H1 (cell line): ENCODE measurements at regions of chr17 and their contacts with region 1.

Region 1: DNA sequence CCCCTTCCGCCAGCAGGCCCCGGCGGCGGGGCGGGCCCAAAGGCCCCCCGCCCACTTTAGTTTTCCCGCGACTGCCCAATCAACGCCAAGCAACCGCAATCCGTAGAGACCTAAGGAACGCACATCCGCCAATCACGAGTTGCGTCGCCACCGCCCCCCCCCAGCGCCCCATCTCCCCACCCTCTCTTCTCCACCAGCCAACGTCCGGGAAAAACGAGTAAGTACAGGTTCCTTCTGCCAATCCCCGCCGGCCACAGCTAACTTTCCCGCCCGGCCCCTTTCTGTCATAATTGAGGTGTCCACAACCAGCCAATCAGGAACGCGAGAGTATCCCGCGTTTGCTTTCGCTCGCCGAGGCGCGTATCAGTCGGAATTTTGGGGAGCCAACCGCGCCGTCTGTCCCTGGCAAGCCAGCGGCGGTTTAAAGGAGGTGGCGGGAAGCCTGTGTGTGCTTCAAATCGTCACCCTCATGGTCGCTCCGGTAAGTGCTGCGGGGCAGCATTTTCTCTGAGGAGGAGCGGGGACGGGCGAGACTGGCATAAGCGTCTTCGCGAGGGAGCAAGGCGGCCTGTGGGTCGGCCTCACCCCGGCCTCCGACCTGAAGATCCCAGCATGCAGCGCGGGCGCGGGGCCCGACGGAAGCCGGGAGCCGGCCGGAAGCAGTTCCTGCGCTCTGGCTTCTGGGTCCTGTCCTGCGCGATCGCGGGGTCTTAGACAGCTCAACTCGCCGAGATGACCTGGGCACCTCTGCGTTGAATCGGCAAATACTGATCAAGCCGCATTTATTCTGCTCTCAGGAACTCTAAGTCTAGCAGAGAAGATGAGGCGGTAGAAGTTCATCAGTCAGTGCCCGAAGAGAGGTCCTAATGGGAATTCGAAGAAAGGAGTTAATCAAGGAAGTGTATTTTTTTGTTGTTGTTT is at the start of gene MIS12:
- DNase-seq: peak; percentile 91 to 94
- H3K4me3 ChIP-seq: peak within 1 kb of the TSS; percentile 96 to 99 (median 98)
- H3K27ac ChIP-seq: peak within 1 kb of the TSS; percentile 100
- H3K4me1 ChIP-seq: no peaks in the 10 kb centered on the region
- H3K27me3 ChIP-seq: no peaks in the 10 kb centered on the region
- CTCF ChIP-seq: no peak
- EP300 ChIP-seq: no peak
- POLR2A ChIP-seq: peak; percentile 94 to 96
- RAD21 ChIP-seq: no peak
- total RNA-seq, gene MIS12: 25.6 and 27.2 TPM in 2 replicates

Region 2: GRCh38 chr17:5272322-5272721 is 214.1 kb before region 1 on chr17:
- CTCF ChIA-PET with region 1: no interaction called
- POLR2A ChIA-PET with region 1: no interaction called
- DNase-seq: no peak
- H3K4me3 ChIP-seq: no peak overlapping the region
- H3K27ac ChIP-seq: no peak overlapping the region
- H3K4me1 ChIP-seq: no peaks in the 10 kb centered on the region
- H3K27me3 ChIP-seq: no peaks in the 10 kb centered on the region
- CTCF ChIP-seq: no peak
- EP300 ChIP-seq: no peak
- POLR2A ChIP-seq: no peak
- RAD21 ChIP-seq: no peak

Region 3: DNA sequence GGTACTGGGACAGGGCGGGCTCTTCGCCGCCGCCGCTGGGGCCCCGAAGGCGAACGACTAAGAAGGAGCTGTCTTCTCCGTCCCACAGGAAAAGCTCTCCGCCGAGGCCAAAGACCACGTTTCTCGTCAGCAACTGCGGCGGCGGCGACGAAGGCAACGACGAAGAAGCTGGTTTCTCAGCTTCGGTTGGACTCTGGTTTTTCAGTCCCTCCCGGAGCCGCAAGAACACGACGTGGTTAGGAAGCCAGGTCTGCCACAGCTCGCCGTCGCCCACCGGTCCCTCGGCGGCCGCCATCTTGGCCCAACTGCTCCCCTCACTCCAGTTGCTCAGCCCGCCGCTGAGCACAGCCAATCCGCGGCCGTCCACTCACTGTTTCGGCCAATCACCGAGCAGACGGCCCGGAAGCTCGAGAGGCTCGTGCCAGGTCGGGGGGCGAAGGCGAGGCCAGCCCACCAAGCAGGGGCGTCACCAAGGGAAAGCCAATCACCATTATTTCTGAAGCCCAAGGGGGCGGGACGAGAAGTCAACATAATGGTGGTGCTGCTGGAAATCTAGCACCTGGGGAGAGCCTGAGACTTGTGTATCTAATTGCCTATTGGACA is 67.0 kb before region 1 on chr17 and contains the start of gene NUP88:
- CTCF ChIA-PET with region 1: no interaction called
- POLR2A ChIA-PET with region 1: interaction called, 11 read pairs
- DNase-seq: peak; percentile 91 to 93
- H3K4me3 ChIP-seq: peak within 1 kb of the TSS; percentile 67 to 99 (median 97)
- H3K27ac ChIP-seq: peak within 1 kb of the TSS; percentile 95
- H3K4me1 ChIP-seq: peaks cover 0 to 4% (median 2%) of the 10 kb centered on the region in 4 experiments; a peak in 3 of 7 replicates
- H3K27me3 ChIP-seq: no peaks in the 10 kb centered on the region
- CTCF ChIP-seq: no peak
- EP300 ChIP-seq: no peak
- POLR2A ChIP-seq: peak; percentile 67 to 94
- RAD21 ChIP-seq: no peak
- total RNA-seq, gene NUP88: 102 and 105 TPM in 2 replicates

Region 4: DNA sequence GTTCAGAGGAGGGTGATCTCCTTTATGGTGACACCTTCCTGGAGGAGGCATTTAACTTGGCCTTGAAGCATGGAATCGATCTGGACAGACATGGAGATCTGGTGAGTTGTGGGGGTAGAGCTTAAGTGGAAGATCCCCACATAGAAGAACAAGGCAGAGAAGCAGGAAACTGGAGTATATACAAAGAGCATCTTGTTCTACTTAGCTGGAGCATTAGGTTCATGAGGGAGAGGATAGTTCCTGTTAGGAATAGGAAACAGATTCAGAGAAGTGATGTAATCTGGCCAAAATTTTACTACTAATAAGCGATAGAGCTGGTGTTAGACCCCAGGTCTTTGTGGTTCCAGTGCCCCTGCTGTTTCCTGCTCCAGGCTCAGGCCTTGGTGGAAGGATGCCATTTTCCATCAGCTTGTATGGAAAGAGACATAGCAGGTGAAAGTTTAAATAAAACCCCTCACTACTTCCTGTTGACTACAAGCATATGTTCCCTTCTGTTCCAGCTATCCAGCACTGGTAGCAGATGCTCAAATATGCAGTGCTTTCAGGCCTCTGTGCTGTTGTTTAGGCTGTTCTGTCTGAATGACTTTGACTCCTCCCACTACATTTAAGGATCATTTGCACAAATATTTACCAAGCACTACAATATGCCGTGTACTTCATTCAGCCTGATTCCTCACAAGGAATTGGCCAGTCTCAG is 57.1 kb before region 1 on chr17:
- CTCF ChIA-PET with region 1: no interaction called
- POLR2A ChIA-PET with region 1: interaction called, 19 read pairs
- DNase-seq: no peak
- H3K4me3 ChIP-seq: no peak overlapping the region
- H3K27ac ChIP-seq: no peak overlapping the region
- H3K4me1 ChIP-seq: no peaks in the 10 kb centered on the region
- H3K27me3 ChIP-seq: no peaks in the 10 kb centered on the region
- CTCF ChIP-seq: no peak
- EP300 ChIP-seq: no peak
- POLR2A ChIP-seq: 0 out of 3 replicates have a peak, but pooled peaks of 1 of the 2 experiments have one; percentile 32
- RAD21 ChIP-seq: no peak

Region 5: GRCh38 chr17:5438716-5439445 is 47.6 kb before region 1 on chr17 and contains the start of gene C1QBP:
- CTCF ChIA-PET with region 1: no interaction called
- POLR2A ChIA-PET with region 1: interaction called, 19 read pairs
- DNase-seq: peak; percentile 88 to 99
- H3K4me3 ChIP-seq: peak within 1 kb of the TSS; percentile 74 to 99 (median 90)
- H3K27ac ChIP-seq: no peak within 1 kb of the TSS
- H3K4me1 ChIP-seq: no peaks in the 10 kb centered on the region; a peak in 1 of 7 replicates
- H3K27me3 ChIP-seq: no peaks in the 10 kb centered on the region
- CTCF ChIP-seq: peak; percentile 63 to 98 (median 97)
- EP300 ChIP-seq: no peak
- POLR2A ChIP-seq: peak; percentile 45 to 82
- RAD21 ChIP-seq: peak; percentile 21 to 38; a peak in 3 of 4 replicates
- total RNA-seq, gene C1QBP: 453 and 454 TPM in 2 replicates

Region 6: DNA sequence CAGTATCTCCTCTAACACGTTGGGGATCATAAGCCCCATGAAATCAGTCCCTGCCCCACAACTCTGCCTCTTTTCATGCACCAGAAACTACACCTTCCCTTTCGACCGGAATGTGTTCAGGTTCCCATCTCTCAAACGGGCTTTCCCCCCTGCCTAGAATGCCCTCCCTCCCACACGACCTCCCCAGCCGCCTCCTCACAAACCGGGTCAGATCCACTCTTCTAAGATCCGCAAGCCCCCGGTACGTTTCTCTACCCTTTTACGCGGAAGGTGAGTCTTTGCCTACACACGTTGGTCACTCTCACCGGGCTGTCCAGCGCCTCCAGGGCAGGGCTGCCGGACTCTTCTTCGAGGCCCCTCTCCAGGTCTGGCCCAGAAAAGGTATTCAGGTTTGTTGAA is 18.4 kb before region 1 on chr17:
- CTCF ChIA-PET with region 1: interaction called, 4 read pairs
- POLR2A ChIA-PET with region 1: interaction called, 91 read pairs
- DNase-seq: no peak
- H3K4me3 ChIP-seq: peak overlapping the region; percentile 98 to 100 (median 98)
- H3K27ac ChIP-seq: peak overlapping the region; percentile 70
- H3K4me1 ChIP-seq: peaks cover 0 to 9% (median 6%) of the 10 kb centered on the region in 4 experiments; a peak in 3 of 7 replicates
- H3K27me3 ChIP-seq: no peaks in the 10 kb centered on the region
- CTCF ChIP-seq: no peak
- EP300 ChIP-seq: no peak
- POLR2A ChIP-seq: no peak
- RAD21 ChIP-seq: no peak

Region 7: DNA sequence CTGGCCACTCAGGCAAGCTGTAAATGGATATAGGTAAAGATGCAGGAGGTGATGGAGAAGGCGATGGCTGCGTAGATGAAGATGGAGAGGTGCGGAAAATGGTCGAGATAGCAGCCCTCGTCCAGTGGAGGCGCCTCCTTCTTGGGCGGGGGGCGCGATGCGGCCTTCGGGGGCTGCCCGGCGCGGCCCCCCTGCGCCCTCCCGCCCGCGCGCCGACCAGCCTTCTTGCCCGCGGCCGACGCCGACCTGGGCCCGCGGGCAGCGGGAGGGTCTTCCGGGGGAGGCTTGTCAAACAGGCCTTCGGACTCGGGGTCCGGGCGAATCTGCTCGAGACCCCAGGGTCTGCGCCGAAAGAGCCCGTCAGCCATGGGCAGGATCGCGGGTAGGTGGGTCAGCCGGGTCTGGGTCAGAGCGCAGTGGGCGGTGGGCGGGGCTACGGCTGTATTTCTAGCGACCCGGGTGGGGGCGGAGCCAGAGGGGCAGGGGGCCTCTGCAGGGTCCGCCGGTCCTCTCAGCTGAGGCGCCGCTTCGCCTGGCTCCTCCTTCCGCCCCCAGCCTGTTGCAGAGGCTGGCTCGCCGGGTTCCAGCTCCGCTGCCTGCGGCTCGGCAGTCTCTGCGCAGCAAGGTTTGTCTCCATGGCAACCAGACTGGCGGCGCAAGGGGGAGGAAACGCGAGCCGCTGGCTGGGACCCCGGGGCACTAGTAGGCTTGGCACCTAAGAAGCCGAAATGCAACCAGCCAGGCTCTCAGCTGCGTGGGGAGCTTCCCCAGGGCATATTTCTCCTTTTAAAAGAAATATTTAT is 14.3 kb after region 1 on chr17:
- CTCF ChIA-PET with region 1: interaction called, 7 read pairs
- POLR2A ChIA-PET with region 1: interaction called, 69 read pairs
- DNase-seq: peak; percentile 95 to 98
- H3K4me3 ChIP-seq: peak overlapping the region; percentile 54 to 66 (median 61)
- H3K27ac ChIP-seq: no peak overlapping the region
- H3K4me1 ChIP-seq: peaks cover 0 to 8% (median 4%) of the 10 kb centered on the region in 4 experiments; a peak in 3 of 7 replicates
- H3K27me3 ChIP-seq: peaks cover 7 to 39% (median 25%) of the 10 kb centered on the region in 4 experiments
- CTCF ChIP-seq: no peak
- EP300 ChIP-seq: no peak
- POLR2A ChIP-seq: peak in 1 of 2 experiments; percentile 66; a peak in 2 of 3 replicates
- RAD21 ChIP-seq: no peak